CD8-positive, alpha-beta T cell (primary cell): ENCODE measurements at regions of chr11 and their contacts with region 1.

Region 1: DNA sequence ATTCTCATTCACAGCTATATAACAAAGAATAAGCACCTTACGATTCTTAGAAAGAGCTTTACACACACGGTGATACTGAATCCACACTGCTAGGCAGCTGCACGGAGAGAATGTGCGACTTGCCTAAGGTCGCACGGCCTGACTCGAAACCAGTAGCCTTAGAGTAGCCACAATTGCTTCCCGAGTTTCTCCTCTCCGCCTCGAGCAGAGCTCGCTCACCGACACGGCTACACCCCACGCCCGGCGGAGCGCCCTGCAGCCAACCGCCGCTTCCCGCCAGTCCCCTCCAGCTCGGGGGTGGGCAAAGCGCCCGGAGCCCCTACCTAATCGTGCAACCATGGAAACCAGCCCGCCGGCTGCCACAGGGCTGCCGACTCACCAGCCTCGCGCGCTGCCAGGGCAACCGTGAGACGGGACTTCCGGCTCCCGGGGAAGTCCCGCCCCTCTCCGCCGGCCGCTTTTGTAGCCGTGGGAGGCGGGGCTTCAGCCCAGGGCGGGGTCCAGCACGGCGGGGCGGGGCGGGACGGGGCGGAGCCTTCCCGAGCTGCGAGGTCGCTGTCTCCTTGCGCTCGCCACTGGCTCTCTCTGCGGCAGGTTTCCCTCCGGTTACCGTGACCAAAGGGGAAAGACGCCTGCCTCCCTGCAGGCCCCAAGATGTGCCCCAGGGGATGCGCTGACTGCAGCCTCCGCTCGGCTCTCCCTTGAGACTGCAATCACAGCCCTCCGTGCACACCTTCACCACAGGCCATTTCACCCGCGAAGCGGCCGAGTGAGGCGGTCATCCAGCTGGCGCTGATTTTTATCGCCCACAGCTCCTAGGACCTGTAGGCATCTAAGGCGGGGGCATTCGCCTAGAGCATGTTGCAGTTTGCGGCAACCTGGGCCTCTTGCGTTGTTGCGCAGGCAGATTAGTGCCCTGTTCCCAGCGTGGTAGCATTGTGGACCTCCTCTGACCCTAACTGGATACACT is 1.1 kb downstream of the BSCL2 start:
- DNase-seq: peak; percentile 88 to 98 (median 95)
- ATAC-seq: peak; percentile 61
- H3K4me3 ChIP-seq: peak overlapping the region; percentile 56 to 59
- H3K4me3 Mint-ChIP-seq: peak overlapping the region; percentile 90
- H3K27ac ChIP-seq: peak overlapping the region; percentile 67 to 73
- H3K27ac Mint-ChIP-seq: peak overlapping the region; percentile 88
- H3K4me1 ChIP-seq: peaks cover 44% of the 10 kb centered on the region
- H3K4me1 Mint-ChIP-seq: peaks cover 44% of the 10 kb centered on the region
- H3K27me3 ChIP-seq: no peaks in the 10 kb centered on the region
- H3K27me3 Mint-ChIP-seq: no peaks in the 10 kb centered on the region
- CTCF ChIP-seq: no peak

Region 2: GRCh38 chr11:62034045-62034355 is 672.2 kb before region 1 on chr11:
- CTCF ChIA-PET with region 1: no interaction called
- POLR2A ChIA-PET with region 1: no interaction called
- intact Hi-C with region 1: no loop called
- DNase-seq: no peak
- ATAC-seq: no peak
- H3K4me3 ChIP-seq: no peak overlapping the region
- H3K4me3 Mint-ChIP-seq: no peak overlapping the region
- H3K27ac ChIP-seq: no peak overlapping the region
- H3K27ac Mint-ChIP-seq: peak overlapping the region; percentile 23
- H3K4me1 ChIP-seq: no peaks in the 10 kb centered on the region
- H3K4me1 Mint-ChIP-seq: peaks cover 4% of the 10 kb centered on the region
- H3K27me3 ChIP-seq: peaks cover 0 to 3% of the 10 kb centered on the region in 2 experiments
- H3K27me3 Mint-ChIP-seq: peaks cover 4% of the 10 kb centered on the region
- CTCF ChIP-seq: no peak

Region 3: DNA sequence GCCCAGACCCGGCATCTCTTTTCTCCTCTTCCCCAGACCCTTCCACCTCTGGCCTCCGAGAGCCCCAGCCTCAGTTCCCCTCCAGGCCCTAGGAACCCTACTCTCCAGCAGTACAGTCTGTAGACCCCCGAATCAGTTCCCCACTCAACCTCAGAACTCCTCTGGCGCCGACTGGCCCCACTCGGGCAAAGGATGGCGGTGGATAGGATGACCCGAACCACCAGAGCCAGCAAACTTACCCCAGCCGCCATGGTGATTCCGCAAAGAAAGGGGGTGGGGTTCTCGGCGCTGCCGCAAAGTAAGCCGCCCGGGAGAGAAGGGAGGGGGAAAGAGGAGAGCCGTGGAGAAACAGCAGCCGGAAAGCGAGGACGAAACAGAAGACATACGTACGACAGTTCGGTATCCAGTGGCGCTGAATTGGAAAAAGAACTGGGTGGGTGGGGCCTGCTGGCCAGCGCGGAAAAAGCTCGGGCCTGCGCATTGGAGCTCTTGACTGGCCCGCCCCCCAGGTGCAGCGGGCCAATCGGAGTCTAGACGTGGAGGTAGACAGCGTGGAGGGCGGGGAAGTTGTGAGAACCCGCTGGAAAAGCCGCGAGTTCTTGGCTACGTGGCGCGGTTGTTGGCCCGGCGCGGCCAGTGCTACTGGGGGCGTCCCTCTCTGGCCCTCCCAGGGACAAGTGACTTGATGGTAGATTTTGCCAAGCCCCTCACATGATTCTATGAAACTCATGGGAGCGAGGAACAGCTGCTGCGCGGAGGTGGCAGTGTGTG is 132.4 kb before region 1 on chr11 and contains the start of gene EEF1G:
- CTCF ChIA-PET with region 1: no interaction called
- POLR2A ChIA-PET with region 1: interaction called, 6 read pairs
- intact Hi-C with region 1: loop called (anchors 1 kb)
- DNase-seq: peak; percentile 95 to 100 (median 97)
- ATAC-seq: peak; percentile 94
- H3K4me3 ChIP-seq: peak within 1 kb of the TSS; percentile 97 to 99
- H3K4me3 Mint-ChIP-seq: peak within 1 kb of the TSS; percentile 97
- H3K27ac ChIP-seq: peak within 1 kb of the TSS; percentile 85
- H3K27ac Mint-ChIP-seq: peak within 1 kb of the TSS; percentile 90
- H3K4me1 ChIP-seq: peaks cover 28% of the 10 kb centered on the region
- H3K4me1 Mint-ChIP-seq: peaks cover 55% of the 10 kb centered on the region
- H3K27me3 ChIP-seq: no peaks in the 10 kb centered on the region
- H3K27me3 Mint-ChIP-seq: no peaks in the 10 kb centered on the region
- CTCF ChIP-seq: no peak
- total RNA-seq, gene EEF1G: 2,174 to 2,204 TPM

Region 4: GRCh38 chr11:62621567-62622470 is 84.3 kb before region 1 on chr11 and contains the start of gene B3GAT3:
- CTCF ChIA-PET with region 1: no interaction called
- POLR2A ChIA-PET with region 1: interaction called, 8 read pairs
- intact Hi-C with region 1: loop called (anchors 1 kb)
- DNase-seq: peak; percentile 90 to 99 (median 97)
- ATAC-seq: peak; percentile 81
- H3K4me3 ChIP-seq: peak within 1 kb of the TSS; percentile 69 to 80
- H3K4me3 Mint-ChIP-seq: peak within 1 kb of the TSS; percentile 98
- H3K27ac ChIP-seq: peak within 1 kb of the TSS; percentile 78 to 88
- H3K27ac Mint-ChIP-seq: peak within 1 kb of the TSS; percentile 97
- H3K4me1 ChIP-seq: peaks cover 20% of the 10 kb centered on the region
- H3K4me1 Mint-ChIP-seq: peaks cover 30% of the 10 kb centered on the region
- H3K27me3 ChIP-seq: no peaks in the 10 kb centered on the region
- H3K27me3 Mint-ChIP-seq: no peaks in the 10 kb centered on the region
- CTCF ChIP-seq: no peak
- total RNA-seq, gene B3GAT3: 41.7 to 44.0 TPM

Region 5: DNA sequence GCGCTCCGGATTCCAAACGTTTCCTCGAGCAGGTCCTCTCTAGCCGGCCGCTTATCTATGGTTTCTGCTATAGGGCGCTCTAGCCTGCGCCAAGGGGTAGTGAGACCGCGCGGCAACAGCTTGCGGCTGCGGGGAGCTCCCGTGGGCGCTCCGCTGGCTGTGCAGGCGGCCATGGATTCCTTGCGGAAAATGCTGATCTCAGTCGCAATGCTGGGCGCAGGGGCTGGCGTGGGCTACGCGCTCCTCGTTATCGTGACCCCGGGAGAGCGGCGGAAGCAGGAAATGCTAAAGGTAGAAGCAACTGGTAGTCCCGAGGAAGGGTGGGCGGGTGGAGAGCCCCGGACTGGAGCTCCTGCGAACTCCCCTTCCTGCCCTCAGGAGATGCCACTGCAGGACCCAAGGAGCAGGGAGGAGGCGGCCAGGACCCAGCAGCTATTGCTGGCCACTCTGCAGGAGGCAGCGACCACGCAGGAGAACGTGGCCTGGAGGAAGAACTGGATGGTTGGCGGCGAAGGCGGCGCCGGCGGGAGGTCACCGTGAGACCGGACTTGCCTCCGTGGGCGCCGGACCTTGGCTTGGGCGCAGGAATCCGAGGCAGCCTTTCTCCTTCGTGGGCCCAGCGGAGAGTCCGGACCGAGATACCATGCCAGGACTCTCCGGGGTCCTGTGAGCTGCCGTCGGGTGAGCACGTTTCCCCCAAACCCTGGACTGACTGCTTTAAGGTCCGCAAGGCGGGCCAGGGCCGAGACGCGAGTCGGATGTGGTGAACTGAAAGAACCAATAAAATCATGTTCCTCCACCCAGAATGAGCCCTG is 34.4 kb before region 1 on chr11 and contains the starts of genes LBHD1 and UQCC3:
- CTCF ChIA-PET with region 1: interaction called, 3 read pairs
- POLR2A ChIA-PET with region 1: interaction called, 52 read pairs
- intact Hi-C with region 1: no loop called
- DNase-seq: peak; percentile 41 to 87 (median 70)
- ATAC-seq: peak; percentile 63
- H3K4me3 ChIP-seq: peak within 1 kb of the TSS; percentile 93 to 99
- H3K4me3 Mint-ChIP-seq: peak within 1 kb of the TSS; percentile 99
- H3K27ac ChIP-seq: peak within 1 kb of the TSS; percentile 77 to 78
- H3K27ac Mint-ChIP-seq: peak within 1 kb of the TSS; percentile 92
- H3K4me1 ChIP-seq: peaks cover 36% of the 10 kb centered on the region
- H3K4me1 Mint-ChIP-seq: peaks cover 62% of the 10 kb centered on the region
- H3K27me3 ChIP-seq: no peaks in the 10 kb centered on the region
- H3K27me3 Mint-ChIP-seq: no peaks in the 10 kb centered on the region
- CTCF ChIP-seq: no peak
- total RNA-seq, gene LBHD1: 14.5 to 14.6 TPM
- total RNA-seq, gene UQCC3: 1.1 to 1.7 TPM

Region 6: DNA sequence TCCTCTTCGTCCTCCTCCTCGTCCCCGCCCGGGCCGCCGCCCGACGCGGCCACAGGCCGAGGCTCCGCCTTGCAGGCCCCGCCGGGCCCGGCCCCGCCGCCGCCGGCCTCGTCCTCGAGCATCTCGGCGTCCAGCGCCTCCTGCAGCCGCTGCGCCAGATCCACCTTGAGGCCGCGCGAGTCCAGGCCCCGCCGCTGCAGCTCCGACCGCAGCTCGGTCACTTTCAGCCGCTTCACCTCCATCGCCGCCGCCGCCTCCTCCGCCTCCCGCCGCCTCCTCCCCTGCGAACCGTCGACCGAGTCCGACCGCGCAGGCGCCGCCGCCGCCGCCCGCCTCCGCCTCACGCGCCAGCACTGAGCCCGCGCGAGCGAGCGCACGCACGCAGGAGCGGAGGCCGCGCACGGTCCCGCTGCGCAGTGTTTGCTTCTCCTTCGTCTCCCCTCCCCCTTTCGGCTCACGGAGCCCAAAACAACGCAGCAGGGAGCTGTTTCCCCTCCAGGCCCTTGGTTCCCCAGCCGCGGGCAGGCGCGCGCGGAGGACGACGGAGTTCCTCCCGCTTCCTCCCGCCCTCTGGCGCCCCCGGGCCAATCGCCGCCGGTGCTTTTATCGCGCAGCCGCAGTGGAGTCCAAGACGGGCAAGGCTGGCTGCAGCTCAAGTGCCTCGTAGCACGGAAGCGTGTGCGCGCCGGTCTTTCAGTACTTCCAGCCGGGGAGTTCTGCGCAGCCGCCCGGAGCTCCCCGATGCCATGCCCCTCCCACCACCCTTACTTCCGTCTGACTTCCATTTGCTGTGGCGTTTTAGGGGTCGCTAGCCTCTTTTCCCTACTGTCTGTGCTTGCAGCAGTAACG is 21.0 kb after region 1 on chr11 and contains the start of gene HNRNPUL2:
- CTCF ChIA-PET with region 1: interaction called, 6 read pairs
- POLR2A ChIA-PET with region 1: interaction called, 82 read pairs
- intact Hi-C with region 1: loop called (anchors 1 kb)
- DNase-seq: peak; percentile 96 to 100 (median 99)
- ATAC-seq: peak; percentile 85
- H3K4me3 ChIP-seq: peak within 1 kb of the TSS; percentile 77 to 81
- H3K4me3 Mint-ChIP-seq: peak within 1 kb of the TSS; percentile 96
- H3K27ac ChIP-seq: peak within 1 kb of the TSS; percentile 82 to 91
- H3K27ac Mint-ChIP-seq: peak within 1 kb of the TSS; percentile 98
- H3K4me1 ChIP-seq: peaks cover 46% of the 10 kb centered on the region
- H3K4me1 Mint-ChIP-seq: peaks cover 57% of the 10 kb centered on the region
- H3K27me3 ChIP-seq: no peaks in the 10 kb centered on the region
- H3K27me3 Mint-ChIP-seq: no peaks in the 10 kb centered on the region
- CTCF ChIP-seq: no peak
- total RNA-seq, gene HNRNPUL2: 29.6 to 31.5 TPM

Region 7: GRCh38 chr11:62787005-62787759 is 81.0 kb after region 1 on chr11 and contains the start of gene TMEM179B:
- CTCF ChIA-PET with region 1: interaction called, 3 read pairs
- POLR2A ChIA-PET with region 1: interaction called, 18 read pairs
- intact Hi-C with region 1: loop called in 1 of 2 experiments (anchors 1 kb)
- DNase-seq: peak; percentile 94 to 100 (median 99)
- ATAC-seq: peak; percentile 68
- H3K4me3 ChIP-seq: peak within 1 kb of the TSS; percentile 94 to 96
- H3K4me3 Mint-ChIP-seq: peak within 1 kb of the TSS; percentile 94
- H3K27ac ChIP-seq: peak within 1 kb of the TSS; percentile 89 to 91
- H3K27ac Mint-ChIP-seq: peak within 1 kb of the TSS; percentile 95
- H3K4me1 ChIP-seq: peaks cover 42% of the 10 kb centered on the region
- H3K4me1 Mint-ChIP-seq: peaks cover 41% of the 10 kb centered on the region
- H3K27me3 ChIP-seq: no peaks in the 10 kb centered on the region
- H3K27me3 Mint-ChIP-seq: no peaks in the 10 kb centered on the region
- CTCF ChIP-seq: peak; percentile 34
- total RNA-seq, gene TMEM179B: 27.5 to 28.4 TPM

Region 8: GRCh38 chr11:62880803-62881578 is 174.8 kb after region 1 on chr11 and contains the start of gene SLC3A2:
- CTCF ChIA-PET with region 1: no interaction called
- POLR2A ChIA-PET with region 1: interaction called, 10 read pairs
- intact Hi-C with region 1: loop called (anchors 1 kb)
- DNase-seq: peak; percentile 76 to 94 (median 85)
- ATAC-seq: peak; percentile 74
- H3K4me3 ChIP-seq: peak within 1 kb of the TSS; percentile 66 to 97
- H3K4me3 Mint-ChIP-seq: peak within 1 kb of the TSS; percentile 100
- H3K27ac ChIP-seq: peak within 1 kb of the TSS; percentile 94 to 99
- H3K27ac Mint-ChIP-seq: peak within 1 kb of the TSS; percentile 100
- H3K4me1 ChIP-seq: peaks cover 36% of the 10 kb centered on the region
- H3K4me1 Mint-ChIP-seq: peaks cover 50% of the 10 kb centered on the region
- H3K27me3 ChIP-seq: no peaks in the 10 kb centered on the region
- H3K27me3 Mint-ChIP-seq: no peaks in the 10 kb centered on the region
- CTCF ChIP-seq: peak; percentile 84
- total RNA-seq, gene SLC3A2: 212 to 245 TPM